Right ventricle myocardium inferior (tissue), 1 donor: ENCODE measurements at regions of chr16 and their contacts with region 1.

Region 1: GRCh38 chr16:65671-66137 is 6.7 kb downstream of the RHBDF1 start:
- DNase-seq: peak; percentile 93
- ATAC-seq: peak; percentile 61

Region 2: GRCh38 chr16:45454-45853 is 20.2 kb before region 1 on chr16:
- intact Hi-C with region 1: no loop called
- DNase-seq: no peak
- ATAC-seq: no peak

Region 3: DNA sequence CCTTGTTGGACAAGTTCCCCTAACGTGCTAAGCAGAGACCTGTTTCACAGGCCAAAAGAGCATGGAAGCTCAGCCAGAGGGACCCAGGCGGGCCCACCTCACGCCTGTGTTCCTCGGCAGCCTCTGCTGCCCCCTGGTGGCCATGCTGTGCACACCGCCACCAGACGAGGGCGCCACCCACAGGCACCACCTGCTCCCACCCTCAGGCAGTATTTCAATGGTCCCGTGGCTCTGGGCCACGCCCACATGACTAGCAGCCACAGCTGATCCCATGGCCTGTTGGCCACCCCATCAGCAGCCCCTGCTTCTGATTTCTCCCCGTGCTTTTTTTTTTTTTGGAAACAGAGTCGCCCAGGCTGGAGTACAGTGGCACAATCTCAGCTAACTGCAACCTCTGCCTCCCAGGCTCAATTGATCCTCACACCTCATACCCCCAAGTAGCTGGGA is 31.3 kb after region 1 on chr16:
- intact Hi-C with region 1: loop called (anchors 1 kb)
- DNase-seq: peak; percentile 96
- ATAC-seq: peak; percentile 83

Region 4: GRCh38 chr16:129075-129474 is 63.4 kb after region 1 on chr16:
- intact Hi-C with region 1: no loop called
- DNase-seq: no peak
- ATAC-seq: no peak